ENCODE measurements at regions of chr16 and their contacts with region 1.

Region 1: GRCh38 chr16:21179126-21179982 is 20.9 kb downstream of the LDAF1 start:
- DNase-seq: no peak
- ATAC-seq: no peak
- H3K4me3 ChIP-seq: no peak overlapping the region
- H3K27ac ChIP-seq: no peak overlapping the region
- H3K4me1 ChIP-seq: no peaks in the 10 kb centered on the region
- H3K27me3 ChIP-seq: no peaks in the 10 kb centered on the region
- CTCF ChIP-seq: no peak
- POLR2A ChIP-seq: no peak

Region 2: GRCh38 chr16:20484726-20485125 is 694.6 kb before region 1 on chr16:
- in situ Hi-C with region 1: no loop called
- intact Hi-C with region 1: no loop called
- DNase-seq: no peak
- ATAC-seq: no peak
- H3K4me3 ChIP-seq: no peak overlapping the region
- H3K27ac ChIP-seq: no peak overlapping the region
- H3K4me1 ChIP-seq: no peaks in the 10 kb centered on the region
- H3K27me3 ChIP-seq: no peaks in the 10 kb centered on the region
- CTCF ChIP-seq: no peak
- POLR2A ChIP-seq: no peak

Region 3: GRCh38 chr16:22670551-22671041 is 1491.2 kb after region 1 on chr16:
- in situ Hi-C with region 1: loop called in 1 of 4 experiments (anchors 10 kb)
- intact Hi-C with region 1: no loop called
- DNase-seq: peak; percentile 11 to 59
- ATAC-seq: peak; percentile 40 to 84
- H3K4me3 ChIP-seq: peak overlapping the region in 2 of 4 donors; percentile 6 to 26
- H3K27ac ChIP-seq: no peak overlapping the region
- H3K4me1 ChIP-seq: peaks cover 4 to 16% of the 10 kb centered on the region in 2 donors
- H3K27me3 ChIP-seq: peaks cover 0 to 3% (median 0%) of the 10 kb centered on the region in 3 donors
- CTCF ChIP-seq: no peak
- POLR2A ChIP-seq: no peak

Measured in gastrocnemius medialis (tissue), 4 donors.